OCI-LY7 (cell line): ENCODE measurements at regions of chr7 and their contacts with region 1.

Region 1: GRCh38 chr7:113421696-113422330 is 303.5 kb upstream of the SMIM30 start:
- DNase-seq: peak; percentile 86
- H3K4me3 ChIP-seq: no peak overlapping the region
- H3K27ac ChIP-seq: no peak overlapping the region
- H3K4me1 ChIP-seq: no peaks in the 10 kb centered on the region
- CTCF ChIP-seq: peak; percentile 90

Region 2: DNA sequence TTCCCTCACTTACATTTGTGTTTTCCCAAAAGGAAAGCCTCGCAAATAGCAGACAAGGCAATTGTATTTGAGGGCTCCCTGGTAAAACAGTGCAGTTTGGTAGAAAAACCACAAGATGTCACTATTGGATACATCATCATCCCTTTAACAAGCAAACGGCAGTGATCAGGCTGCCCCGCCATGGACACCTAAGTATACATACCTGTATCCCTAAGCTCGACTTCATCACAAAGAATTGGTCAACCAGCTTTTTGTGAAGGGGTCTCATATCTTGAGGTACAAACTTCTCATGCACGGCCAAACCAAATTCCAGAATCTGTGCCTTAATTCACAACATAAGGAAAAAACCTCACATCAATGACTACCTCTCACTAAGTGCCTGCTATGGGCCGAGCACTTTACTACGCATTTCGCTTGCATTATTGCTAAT is 1680.0 kb before region 1 on chr7:
- CTCF ChIA-PET with region 1: no interaction called
- POLR2A ChIA-PET with region 1: no interaction called
- intact Hi-C with region 1: loop called (anchors 10 kb)
- DNase-seq: peak; percentile 63
- H3K4me3 ChIP-seq: no peak overlapping the region
- H3K27ac ChIP-seq: no peak overlapping the region
- H3K4me1 ChIP-seq: no peaks in the 10 kb centered on the region
- CTCF ChIP-seq: peak; percentile 79

Region 3: DNA sequence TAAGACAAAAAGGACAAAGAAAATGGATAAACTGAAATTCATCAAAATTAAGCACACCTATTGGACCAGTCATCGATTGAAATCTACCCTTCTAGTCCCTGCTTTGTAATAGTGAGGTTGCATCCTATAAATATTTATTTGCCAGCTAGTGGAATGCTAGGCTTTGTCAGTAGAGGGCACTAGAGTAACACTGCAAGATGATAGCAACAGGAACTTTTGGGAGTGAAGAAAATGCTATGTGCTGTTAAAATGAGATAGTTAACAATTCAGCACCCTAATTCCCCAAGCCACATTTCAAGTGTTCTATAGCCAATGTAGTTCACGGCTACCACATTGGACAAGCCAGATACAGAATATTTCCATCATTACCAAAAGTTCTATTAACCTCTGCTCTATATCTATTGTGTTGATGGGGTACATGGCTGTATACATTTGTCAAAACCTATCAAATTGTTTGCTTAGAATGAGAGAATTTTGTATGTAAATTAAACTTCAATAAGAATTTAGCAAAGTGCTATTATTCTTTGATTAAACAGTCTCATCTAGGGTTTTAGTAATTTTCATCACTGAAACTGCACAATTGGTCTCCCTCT is 871.2 kb before region 1 on chr7:
- CTCF ChIA-PET with region 1: no interaction called
- POLR2A ChIA-PET with region 1: no interaction called
- intact Hi-C with region 1: loop called (anchors 1 kb)
- DNase-seq: peak; percentile 71
- H3K4me3 ChIP-seq: no peak overlapping the region
- H3K27ac ChIP-seq: no peak overlapping the region
- H3K4me1 ChIP-seq: no peaks in the 10 kb centered on the region
- CTCF ChIP-seq: peak; percentile 99

Region 4: DNA sequence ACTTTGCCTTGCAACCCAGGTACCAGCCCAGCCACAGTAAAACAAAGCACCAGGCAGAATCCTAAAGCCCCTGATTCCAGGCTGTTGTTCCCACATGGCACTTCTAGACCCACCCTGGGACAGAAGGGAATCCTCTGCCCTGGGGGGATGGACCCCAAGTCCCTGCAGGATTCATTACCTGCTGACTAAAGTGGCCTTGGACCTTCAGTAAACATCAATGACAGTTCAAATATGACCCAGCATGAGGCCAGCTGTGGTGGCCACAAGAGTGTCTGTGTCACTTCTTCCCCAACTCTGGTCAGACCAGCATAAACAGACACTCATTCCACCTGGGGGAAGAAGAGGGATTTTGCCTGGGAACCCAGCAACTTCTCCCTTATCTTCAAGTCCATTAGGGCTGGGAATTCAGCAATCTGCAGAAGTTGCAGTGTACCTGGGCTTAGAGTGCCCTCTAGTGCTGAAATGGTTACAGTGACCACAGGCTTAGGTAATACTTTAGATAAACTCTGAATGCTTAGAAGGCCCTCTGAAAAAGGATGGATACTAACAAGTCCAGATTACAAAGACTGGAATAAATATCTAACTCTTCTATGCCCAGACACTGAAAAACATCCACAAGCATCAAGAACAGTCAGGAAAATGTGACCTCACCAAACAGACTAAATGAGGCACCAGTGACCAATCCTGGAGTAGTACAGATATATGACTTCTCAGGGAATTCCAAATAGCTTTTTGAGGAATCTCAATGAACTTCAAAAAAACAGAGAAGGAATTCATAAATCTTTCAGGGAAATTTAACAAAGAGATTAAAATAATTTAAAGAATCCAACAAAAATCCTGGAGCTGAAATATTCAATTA is 523.2 kb before region 1 on chr7:
- CTCF ChIA-PET with region 1: no interaction called
- POLR2A ChIA-PET with region 1: no interaction called
- intact Hi-C with region 1: loop called (anchors 5 kb)
- DNase-seq: peak; percentile 59
- H3K4me3 ChIP-seq: no peak overlapping the region
- H3K27ac ChIP-seq: no peak overlapping the region
- H3K4me1 ChIP-seq: no peaks in the 10 kb centered on the region
- CTCF ChIP-seq: peak; percentile 95

Region 5: GRCh38 chr7:113015032-113015645 is 406.7 kb before region 1 on chr7:
- CTCF ChIA-PET with region 1: no interaction called
- POLR2A ChIA-PET with region 1: no interaction called
- intact Hi-C with region 1: loop called (anchors 5 kb)
- DNase-seq: peak; percentile 6
- H3K4me3 ChIP-seq: no peak overlapping the region
- H3K27ac ChIP-seq: no peak overlapping the region
- H3K4me1 ChIP-seq: no peaks in the 10 kb centered on the region
- CTCF ChIP-seq: peak; percentile 73

Region 6: GRCh38 chr7:113159746-113160339 is 262.0 kb before region 1 on chr7:
- CTCF ChIA-PET with region 1: no interaction called
- POLR2A ChIA-PET with region 1: interaction called, 3 read pairs
- intact Hi-C with region 1: loop called (anchors 2 kb)
- DNase-seq: peak; percentile 41
- H3K4me3 ChIP-seq: no peak overlapping the region
- H3K27ac ChIP-seq: no peak overlapping the region
- H3K4me1 ChIP-seq: no peaks in the 10 kb centered on the region
- CTCF ChIP-seq: peak; percentile 84

Region 7: GRCh38 chr7:113331155-113331898 is 90.5 kb before region 1 on chr7:
- CTCF ChIA-PET with region 1: no interaction called
- POLR2A ChIA-PET with region 1: no interaction called
- intact Hi-C with region 1: no loop called
- DNase-seq: no peak
- H3K4me3 ChIP-seq: no peak overlapping the region
- H3K27ac ChIP-seq: no peak overlapping the region
- H3K4me1 ChIP-seq: no peaks in the 10 kb centered on the region
- CTCF ChIP-seq: no peak

Region 8: GRCh38 chr7:114466917-114467316 is 1045.1 kb after region 1 on chr7:
- CTCF ChIA-PET with region 1: no interaction called
- POLR2A ChIA-PET with region 1: no interaction called
- intact Hi-C with region 1: no loop called
- DNase-seq: no peak
- H3K4me3 ChIP-seq: no peak overlapping the region
- H3K27ac ChIP-seq: no peak overlapping the region
- H3K4me1 ChIP-seq: no peaks in the 10 kb centered on the region
- CTCF ChIP-seq: no peak